Activated naive CD4-positive, alpha-beta T cell treated with anti-CD3 and anti-CD28 coated beads for 36 hours (primary cell): ENCODE measurements at regions of chr1 and their contacts with region 1.

Region 1: DNA sequence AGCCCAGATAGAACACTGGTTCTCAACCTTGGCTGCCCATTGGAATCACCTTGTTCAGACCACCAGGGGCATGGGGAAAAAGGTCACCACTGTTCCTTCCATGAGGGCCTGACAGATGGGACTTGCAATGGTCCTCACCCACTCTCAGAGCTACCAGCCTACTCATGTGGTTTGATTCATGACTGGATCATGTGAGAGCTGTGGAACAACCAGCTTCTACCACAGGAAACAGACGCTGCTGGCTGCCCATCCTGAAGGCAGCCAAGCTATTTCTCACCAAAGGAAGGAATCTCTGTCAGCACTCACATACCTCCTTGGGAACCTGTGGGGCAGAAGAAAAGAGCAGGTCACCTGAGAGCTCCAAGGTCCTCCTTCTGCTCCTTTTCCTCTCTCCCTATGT is 53.6 kb downstream of the CAPN8 start:
- DNase-seq: no peak
- H3K4me3 Mint-ChIP-seq: no peak overlapping the region
- H3K27ac Mint-ChIP-seq: no peak overlapping the region
- H3K4me1 Mint-ChIP-seq: no peaks in the 10 kb centered on the region
- H3K27me3 Mint-ChIP-seq: no peaks in the 10 kb centered on the region

Region 2: GRCh38 chr1:223556414-223557129 is 55.4 kb before region 1 on chr1:
- CTCF ChIA-PET with region 1: interaction called, 20 read pairs
- intact Hi-C with region 1: no loop called
- DNase-seq: peak; percentile 75
- H3K4me3 Mint-ChIP-seq: no peak overlapping the region
- H3K27ac Mint-ChIP-seq: no peak overlapping the region
- H3K4me1 Mint-ChIP-seq: no peaks in the 10 kb centered on the region
- H3K27me3 Mint-ChIP-seq: no peaks in the 10 kb centered on the region

Region 3: GRCh38 chr1:223628233-223629125 is 16.5 kb after region 1 on chr1:
- CTCF ChIA-PET with region 1: interaction called, 17 read pairs
- intact Hi-C with region 1: no loop called
- DNase-seq: peak; percentile 62
- H3K4me3 Mint-ChIP-seq: no peak overlapping the region
- H3K27ac Mint-ChIP-seq: no peak overlapping the region
- H3K4me1 Mint-ChIP-seq: no peaks in the 10 kb centered on the region
- H3K27me3 Mint-ChIP-seq: peaks cover 2% of the 10 kb centered on the region